ENCODE measurements at regions of chr3 and their contacts with region 1.

Region 1: DNA sequence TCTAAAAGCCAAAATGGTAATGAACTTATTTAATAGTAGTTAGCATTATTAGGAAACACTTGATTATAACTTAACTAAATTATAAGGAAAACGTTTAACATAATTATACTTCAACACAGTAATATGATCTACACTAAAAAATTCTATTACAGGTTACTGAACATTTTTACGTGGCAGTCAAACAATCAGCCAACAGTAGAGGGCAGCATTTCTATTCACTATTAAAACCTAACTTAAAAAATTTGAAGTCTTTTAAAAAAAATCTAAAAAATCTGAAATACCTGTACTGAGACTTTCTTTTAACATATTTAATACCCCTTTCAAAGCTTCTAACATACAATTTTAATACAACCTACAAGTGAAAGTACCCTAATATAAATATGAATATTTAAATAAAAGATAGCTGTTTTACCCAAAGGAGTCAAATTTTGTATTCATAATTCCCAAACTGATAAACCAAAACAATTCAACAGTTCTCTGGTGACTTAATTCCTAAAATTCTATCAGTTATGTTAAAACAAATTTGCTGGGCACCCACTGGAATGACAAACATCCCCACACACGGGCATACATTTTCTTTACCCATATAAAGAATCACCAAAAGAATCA is 41.5 kb downstream of the DLG1 start:
- DNase-seq: peak; percentile 21
- H3K4me3 Mint-ChIP-seq: no peak overlapping the region
- H3K27ac Mint-ChIP-seq: no peak overlapping the region
- H3K4me1 Mint-ChIP-seq: peaks cover 52% of the 10 kb centered on the region
- H3K27me3 Mint-ChIP-seq: no peaks in the 10 kb centered on the region

Region 2: GRCh38 chr3:197168606-197169005 is 88.3 kb before region 1 on chr3:
- CTCF ChIA-PET with region 1: no interaction called
- POLR2A ChIA-PET with region 1: no interaction called
- intact Hi-C with region 1: no loop called
- DNase-seq: no peak
- H3K4me3 Mint-ChIP-seq: no peak overlapping the region
- H3K27ac Mint-ChIP-seq: no peak overlapping the region
- H3K4me1 Mint-ChIP-seq: peaks cover 15% of the 10 kb centered on the region
- H3K27me3 Mint-ChIP-seq: no peaks in the 10 kb centered on the region

Region 3: DNA sequence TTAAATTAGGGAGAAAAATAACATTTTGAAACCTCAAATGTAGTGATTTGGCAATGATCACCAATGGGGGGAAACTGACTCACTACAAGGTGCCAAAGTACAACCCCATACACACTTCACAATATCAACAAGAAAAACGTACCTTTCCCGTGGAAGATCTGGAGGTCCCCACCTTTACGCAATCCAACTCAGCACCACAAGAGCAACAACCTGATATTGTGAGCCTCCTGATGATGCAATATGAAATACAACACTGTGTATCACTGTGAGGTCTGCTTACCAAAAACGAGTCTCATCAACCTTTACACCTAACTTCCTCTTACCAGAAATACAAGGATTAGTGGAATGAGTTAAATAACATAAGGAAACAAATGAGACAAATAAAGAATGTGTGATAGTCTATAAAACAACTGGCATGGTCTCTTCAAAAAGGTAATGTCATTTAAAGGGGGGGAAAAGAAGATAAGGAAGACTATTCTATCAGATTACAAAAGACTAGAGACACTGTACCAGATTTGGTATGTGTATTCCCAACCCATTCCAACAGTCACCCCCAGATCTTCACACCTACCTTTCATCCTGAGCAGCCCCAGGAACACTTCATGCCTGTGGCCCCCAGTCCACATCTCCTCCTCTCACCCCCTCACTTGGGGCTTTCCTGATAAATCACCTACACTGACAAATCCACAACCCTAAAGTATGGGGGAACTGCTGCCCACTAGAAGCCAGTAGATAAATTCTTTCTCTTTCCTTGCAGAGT is 13.8 kb after region 1 on chr3:
- CTCF ChIA-PET with region 1: interaction called, 46 read pairs
- POLR2A ChIA-PET with region 1: no interaction called
- intact Hi-C with region 1: no loop called
- DNase-seq: no peak
- H3K4me3 Mint-ChIP-seq: no peak overlapping the region
- H3K27ac Mint-ChIP-seq: no peak overlapping the region
- H3K4me1 Mint-ChIP-seq: peaks cover 43% of the 10 kb centered on the region
- H3K27me3 Mint-ChIP-seq: no peaks in the 10 kb centered on the region

Region 4: GRCh38 chr3:197298341-197298857 is 41.5 kb after region 1 on chr3 and contains the start of gene DLG1:
- CTCF ChIA-PET with region 1: interaction called, 13 read pairs
- POLR2A ChIA-PET with region 1: interaction called, 3 read pairs
- intact Hi-C with region 1: loop called (anchors 5 kb)
- DNase-seq: peak; percentile 91
- H3K4me3 Mint-ChIP-seq: peak within 1 kb of the TSS; percentile 97
- H3K27ac Mint-ChIP-seq: peak within 1 kb of the TSS; percentile 89
- H3K4me1 Mint-ChIP-seq: peaks cover 23% of the 10 kb centered on the region
- H3K27me3 Mint-ChIP-seq: peaks cover 24% of the 10 kb centered on the region
- total RNA-seq, gene DLG1: 52.6 to 53.3 TPM

Region 5: GRCh38 chr3:197454014-197454413 is 197.1 kb after region 1 on chr3:
- CTCF ChIA-PET with region 1: interaction called, 34 read pairs
- POLR2A ChIA-PET with region 1: no interaction called
- intact Hi-C with region 1: loop called (anchors 2 kb)
- DNase-seq: peak; percentile 20
- H3K4me3 Mint-ChIP-seq: no peak overlapping the region
- H3K27ac Mint-ChIP-seq: no peak overlapping the region
- H3K4me1 Mint-ChIP-seq: peaks cover 12% of the 10 kb centered on the region
- H3K27me3 Mint-ChIP-seq: peaks cover 3% of the 10 kb centered on the region

Region 6: DNA sequence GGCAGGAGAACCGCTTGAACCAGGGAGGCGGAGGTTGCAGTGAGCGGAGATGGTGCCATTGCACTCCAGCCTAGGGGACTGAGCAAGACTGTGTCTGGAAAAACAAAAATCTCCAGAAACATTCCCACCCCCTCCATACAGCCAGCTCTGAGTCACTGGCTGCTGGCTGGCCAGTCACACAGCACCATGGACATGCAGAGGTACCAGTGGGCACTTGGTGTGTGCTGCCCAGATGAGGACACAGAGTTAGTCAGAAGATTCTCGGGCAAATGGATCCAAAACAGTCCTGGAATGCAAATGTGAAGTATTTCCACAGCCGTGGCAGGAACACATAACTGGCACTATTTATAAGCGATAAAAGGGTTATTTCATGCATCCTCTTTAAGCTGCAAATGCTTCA is 254.2 kb after region 1 on chr3:
- CTCF ChIA-PET with region 1: interaction called, 30 read pairs
- POLR2A ChIA-PET with region 1: no interaction called
- intact Hi-C with region 1: no loop called
- DNase-seq: no peak
- H3K4me3 Mint-ChIP-seq: no peak overlapping the region
- H3K27ac Mint-ChIP-seq: no peak overlapping the region
- H3K4me1 Mint-ChIP-seq: peaks cover 4% of the 10 kb centered on the region
- H3K27me3 Mint-ChIP-seq: no peaks in the 10 kb centered on the region

Measured in activated CD4-positive, alpha-beta memory T cell treated with anti-CD3 and anti-CD28 coated beads for 36 hours (primary cell).